Upper lobe of right lung (tissue), 1 donor: ENCODE measurements at regions of chr5 and their contacts with region 1.

Region 1: DNA sequence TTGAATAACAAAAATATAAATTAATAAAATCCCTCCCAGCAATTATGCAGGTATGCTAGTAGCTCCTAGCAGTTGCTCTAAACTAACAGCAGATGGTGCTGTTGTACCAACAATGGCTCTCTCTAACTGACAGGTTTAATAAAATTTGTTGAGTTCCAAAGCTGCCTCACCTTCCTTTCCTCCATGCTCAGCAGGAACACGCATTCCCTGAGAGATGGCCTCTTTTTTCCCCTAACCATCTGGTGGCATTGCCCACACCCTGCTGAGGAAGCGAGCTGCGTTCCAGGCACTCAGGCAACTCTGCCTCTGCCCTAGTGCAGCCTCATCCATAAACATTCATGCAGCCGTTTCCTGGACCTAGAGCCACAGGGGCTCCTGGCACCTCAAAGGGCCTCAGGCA is 106.2 kb downstream of the KLHL3 start:
- DNase-seq: no peak
- ATAC-seq: peak; percentile 89
- H3K4me3 ChIP-seq: no peak overlapping the region
- H3K27ac ChIP-seq: no peak overlapping the region
- H3K4me1 ChIP-seq: peaks cover 8% of the 10 kb centered on the region
- H3K27me3 ChIP-seq: no peaks in the 10 kb centered on the region
- CTCF ChIP-seq: peak; percentile 96

Region 2: DNA sequence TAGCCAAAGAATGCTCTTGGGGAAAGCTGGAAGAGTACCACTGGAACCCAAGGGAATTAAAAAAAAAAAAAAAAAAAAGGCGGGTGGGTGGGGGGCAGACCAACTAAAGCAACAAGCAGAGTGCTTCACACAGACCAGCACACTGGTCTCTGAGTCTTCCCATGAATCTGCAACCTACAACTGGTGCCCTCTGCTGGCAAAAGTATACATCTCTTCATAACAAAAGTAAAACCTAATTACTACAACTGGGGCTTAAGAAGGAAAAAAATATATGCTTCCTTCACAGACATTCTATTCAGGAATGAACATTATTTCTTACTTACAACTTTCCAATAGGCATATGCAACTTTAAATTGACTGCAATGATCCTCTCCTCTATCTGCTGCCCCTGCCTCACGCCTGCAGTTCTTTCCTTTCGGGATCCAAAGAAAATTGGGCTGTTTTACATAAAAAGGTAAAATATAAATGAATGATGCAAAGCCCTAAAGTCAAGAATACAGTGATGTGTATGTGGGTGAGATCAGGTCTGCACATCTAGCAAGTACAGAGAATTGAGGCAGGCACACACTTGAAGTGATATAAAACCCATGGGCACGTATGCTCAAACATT is 113.5 kb after region 1 on chr5:
- intact Hi-C with region 1: loop called (anchors 5 kb)
- DNase-seq: no peak
- ATAC-seq: peak; percentile 90
- H3K4me3 ChIP-seq: no peak overlapping the region
- H3K27ac ChIP-seq: no peak overlapping the region
- H3K4me1 ChIP-seq: no peaks in the 10 kb centered on the region
- H3K27me3 ChIP-seq: no peaks in the 10 kb centered on the region
- CTCF ChIP-seq: peak; percentile 70

Region 3: DNA sequence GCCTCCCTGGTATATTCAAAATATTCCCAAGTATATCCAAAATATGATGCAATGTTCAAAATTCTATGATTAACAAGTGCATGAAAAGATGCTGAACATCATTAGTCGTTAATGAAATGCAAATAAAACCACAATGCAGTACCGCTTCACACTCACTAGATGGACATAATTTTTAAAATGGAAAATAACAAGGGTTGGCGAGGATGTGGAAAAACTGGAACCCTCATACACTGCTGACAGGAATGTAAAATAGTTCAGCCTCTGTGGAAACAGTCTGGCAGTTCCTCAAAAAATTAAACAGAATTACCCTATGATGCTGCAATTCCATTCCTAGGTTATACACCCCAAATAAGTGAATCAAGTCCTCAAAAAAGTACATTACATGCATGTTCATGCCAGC is 201.9 kb after region 1 on chr5:
- intact Hi-C with region 1: no loop called
- DNase-seq: no peak
- ATAC-seq: no peak
- H3K4me3 ChIP-seq: no peak overlapping the region
- H3K27ac ChIP-seq: no peak overlapping the region
- H3K4me1 ChIP-seq: no peaks in the 10 kb centered on the region
- H3K27me3 ChIP-seq: no peaks in the 10 kb centered on the region
- CTCF ChIP-seq: peak; percentile 13